Motor neuron (in vitro differentiated cells): ENCODE measurements at regions of chr12 and their contacts with region 1.

Region 1: GRCh38 chr12:27048822-27049752 is 26.7 kb downstream of the MED21 start:
- ATAC-seq: peak in 3 of 8 experiments; percentile 24 to 53 (median 48)
- H3K4me3 ChIP-seq: no peak overlapping the region
- H3K27ac ChIP-seq: no peak overlapping the region
- H3K4me1 ChIP-seq: no peaks in the 10 kb centered on the region

Region 2: GRCh38 chr12:25830456-25830855 is 1218.6 kb before region 1 on chr12:
- in situ Hi-C with region 1: no loop called
- ATAC-seq: peak in 2 of 8 experiments; percentile 40 to 82
- H3K4me3 ChIP-seq: no peak overlapping the region
- H3K27ac ChIP-seq: no peak overlapping the region
- H3K4me1 ChIP-seq: no peaks in the 10 kb centered on the region

Region 3: DNA sequence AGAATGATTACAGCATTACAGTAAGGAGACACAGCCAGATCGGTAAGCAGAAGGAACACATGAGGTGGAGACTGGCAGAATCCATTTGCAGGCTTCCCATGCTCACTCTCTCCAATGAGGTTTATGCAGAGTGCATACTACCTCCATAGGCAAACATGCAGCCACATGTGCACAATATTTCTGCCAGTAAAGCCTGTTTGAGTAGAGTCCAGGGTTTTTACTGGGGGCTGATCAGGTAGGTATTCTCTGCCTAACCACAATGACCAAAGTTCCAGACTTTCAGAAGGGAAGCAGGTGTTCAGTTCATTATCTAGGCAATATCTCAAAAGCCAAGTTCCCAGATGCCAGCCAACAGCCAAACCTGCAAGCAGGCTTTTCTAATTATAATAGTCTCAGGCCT is 142.4 kb before region 1 on chr12:
- in situ Hi-C with region 1: no loop called
- ATAC-seq: peak in 1 of 8 experiments; percentile 74
- H3K4me3 ChIP-seq: no peak overlapping the region
- H3K27ac ChIP-seq: no peak overlapping the region
- H3K4me1 ChIP-seq: no peaks in the 10 kb centered on the region

Region 4: DNA sequence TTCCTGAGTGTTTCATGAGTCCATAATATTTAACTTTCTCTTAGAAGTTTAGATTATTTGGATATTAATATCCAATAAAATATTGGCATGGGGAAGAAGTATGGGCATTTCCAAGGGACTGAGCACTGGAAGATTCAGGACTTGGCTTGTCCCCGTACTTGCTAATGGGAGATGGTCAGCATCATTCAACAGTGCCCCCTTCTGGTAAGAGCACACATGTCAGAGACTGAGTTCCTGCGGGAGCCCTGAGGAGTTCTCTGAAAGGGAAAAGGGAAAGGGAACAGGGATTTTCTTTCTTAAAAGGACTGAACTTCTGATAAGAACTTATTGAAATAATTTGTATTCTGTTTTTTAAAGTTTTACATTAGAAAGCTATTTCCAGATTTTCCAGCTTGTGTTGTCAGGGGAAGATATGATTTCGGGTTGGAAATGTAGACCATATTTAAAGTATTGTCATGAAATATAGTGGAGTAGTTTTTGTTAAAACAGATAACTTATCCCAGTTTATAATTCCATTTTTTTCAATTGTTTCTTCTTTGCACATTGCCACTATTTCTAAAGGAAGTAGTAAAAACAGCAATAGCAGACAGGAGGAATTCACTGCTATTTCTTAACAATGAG is 93.1 kb after region 1 on chr12:
- in situ Hi-C with region 1: loop called in 2 of 9 experiments (anchors 25 kb)
- ATAC-seq: peak in 6 of 8 experiments; percentile 54 to 99 (median 90)
- H3K4me3 ChIP-seq: no peak overlapping the region
- H3K27ac ChIP-seq: no peak overlapping the region
- H3K4me1 ChIP-seq: no peaks in the 10 kb centered on the region

Region 5: DNA sequence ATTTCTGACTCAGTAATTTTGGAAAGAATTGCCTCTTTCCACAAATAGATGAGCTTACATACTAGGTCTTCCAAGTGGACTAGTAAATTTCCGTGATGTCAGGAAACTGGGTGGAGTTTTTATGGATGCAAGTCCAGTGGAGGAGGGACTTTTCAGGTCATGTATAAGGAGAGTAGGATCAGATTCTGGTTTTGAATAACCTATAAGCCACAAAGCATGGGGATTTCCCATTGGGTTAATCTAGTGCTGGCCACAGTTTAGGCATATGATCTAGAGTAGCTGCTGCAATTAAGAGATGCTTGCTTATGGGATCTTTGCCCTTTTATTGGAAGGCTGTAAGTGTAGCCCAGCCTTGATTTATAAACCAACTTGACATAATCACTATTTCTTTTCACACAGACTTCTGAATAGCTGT is 228.8 kb after region 1 on chr12:
- in situ Hi-C with region 1: loop called in 1 of 9 experiments (anchors 25 kb)
- ATAC-seq: peak in 3 of 8 experiments; percentile 89 to 92 (median 90)
- H3K4me3 ChIP-seq: no peak overlapping the region
- H3K27ac ChIP-seq: no peak overlapping the region
- H3K4me1 ChIP-seq: peaks cover 0 to 6% of the 10 kb centered on the region in 2 donors

Region 6: GRCh38 chr12:27474344-27474743 is 425.3 kb after region 1 on chr12:
- in situ Hi-C with region 1: no loop called
- ATAC-seq: peak in 2 of 8 experiments; percentile 23 to 46
- H3K4me3 ChIP-seq: no peak overlapping the region
- H3K27ac ChIP-seq: no peak overlapping the region
- H3K4me1 ChIP-seq: peaks cover 4 to 9% of the 10 kb centered on the region in 2 donors